Cardiac septum (tissue), 1 donor: ENCODE measurements at regions of chr16 and their contacts with region 1.

Region 1: DNA sequence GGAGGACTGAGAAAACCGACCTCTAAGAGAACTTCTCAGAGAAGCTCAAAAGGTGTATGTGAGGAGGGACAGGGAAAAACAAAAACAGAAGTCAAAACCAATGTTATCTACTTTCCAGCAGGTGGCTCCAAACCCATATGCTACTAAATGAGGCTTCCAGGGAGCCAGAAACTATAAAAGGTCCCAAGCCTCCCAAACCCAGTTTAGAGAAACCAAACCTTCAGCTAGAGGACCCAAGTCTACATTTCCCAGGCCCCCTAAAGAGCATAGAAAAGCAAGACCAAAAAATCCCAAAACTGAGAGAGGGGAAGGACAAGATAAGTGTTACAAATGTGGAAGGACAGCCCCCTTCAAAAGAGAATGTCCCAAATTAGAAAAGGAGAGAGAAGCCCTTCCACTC is 3.7 kb downstream of the HPR start:
- DNase-seq: no peak

Region 2: DNA sequence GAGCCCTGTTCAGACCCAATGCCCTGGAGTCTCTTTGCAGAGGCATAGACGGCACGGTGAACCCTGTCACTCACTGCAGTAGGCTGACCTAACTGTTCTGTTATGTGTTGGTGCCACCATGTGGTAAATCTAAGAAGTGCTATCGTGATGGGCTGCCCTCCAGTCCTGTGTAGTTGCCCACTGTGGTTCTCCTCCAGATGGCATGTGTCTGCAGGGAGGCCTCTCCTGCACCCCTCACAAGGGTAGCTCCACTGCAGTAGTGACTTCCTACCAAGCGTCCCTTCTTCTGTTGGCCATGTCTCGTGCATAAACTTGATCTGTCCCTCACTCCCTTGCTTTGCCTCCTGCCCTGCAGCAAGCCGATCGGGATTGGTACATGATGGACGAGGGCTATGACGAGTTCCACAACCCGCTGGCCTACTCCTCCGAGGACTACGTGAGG is 32.7 kb after region 1 on chr16:
- intact Hi-C with region 1: loop called (anchors 1 kb)
- DNase-seq: no peak